ENCODE measurements at regions of chr2 and their contacts with region 1.

Region 1: GRCh38 chr2:197434541-197435513 is at the start of gene SF3B1:
- DNase-seq: peak; percentile 99
- H3K4me3 ChIP-seq: peak within 1 kb of the TSS; percentile 86 to 98 (median 92)
- H3K27ac ChIP-seq: peak within 1 kb of the TSS; percentile 91 to 98 (median 97)
- H3K4me1 ChIP-seq: peaks cover 0 to 50% (median 45%) of the 10 kb centered on the region in 4 donors
- H3K27me3 ChIP-seq: no peaks in the 10 kb centered on the region
- CTCF ChIP-seq: no peak
- EP300 ChIP-seq: peak in 1 of 4 donors; percentile 82
- POLR2A ChIP-seq: peak; percentile 90 to 93
- total RNA-seq, gene SF3B1: 258 to 475 (median 332) TPM

Region 2: DNA sequence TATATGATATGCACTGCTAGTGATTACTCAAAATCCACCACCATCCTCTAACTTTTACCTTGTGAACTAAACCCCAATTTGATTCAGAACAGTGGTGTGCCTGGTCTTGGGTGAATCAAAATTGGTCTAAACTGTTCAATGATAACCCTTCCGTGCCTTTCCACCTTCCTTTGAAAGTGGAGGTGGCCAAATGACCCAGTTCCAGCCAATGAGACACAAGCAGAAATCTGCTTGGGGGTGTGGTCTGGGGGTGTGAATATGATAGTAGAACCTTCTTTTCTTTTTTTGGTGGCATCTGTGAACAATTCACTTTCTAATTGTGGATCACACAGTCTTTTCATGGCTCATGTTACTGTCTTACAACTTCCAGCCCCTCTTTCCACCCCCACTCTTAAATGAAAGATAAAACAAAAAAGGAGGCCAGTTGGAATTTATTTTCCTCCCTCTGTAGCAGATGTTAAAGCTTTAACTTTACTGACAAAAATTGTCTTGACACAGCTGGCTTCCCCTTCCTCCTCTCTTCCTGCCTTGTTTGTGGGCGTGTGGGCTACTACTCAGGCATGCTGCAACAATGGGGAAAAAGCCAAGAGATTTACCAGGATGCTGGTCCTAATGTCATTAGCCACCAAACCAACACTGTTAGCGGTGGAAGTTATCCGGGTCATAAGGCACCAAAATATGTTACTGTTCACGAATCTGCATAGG is 65.4 kb before region 1 on chr2:
- intact Hi-C with region 1: no loop called
- DNase-seq: no peak
- H3K4me3 ChIP-seq: no peak overlapping the region
- H3K27ac ChIP-seq: no peak overlapping the region
- H3K4me1 ChIP-seq: no peaks in the 10 kb centered on the region
- H3K27me3 ChIP-seq: no peaks in the 10 kb centered on the region
- CTCF ChIP-seq: no peak
- EP300 ChIP-seq: no peak
- POLR2A ChIP-seq: no peak

Region 3: GRCh38 chr2:197499594-197500526 is 65.0 kb after region 1 on chr2 and contains the starts of genes HSPD1 and HSPE1:
- intact Hi-C with region 1: loop called (anchors 5 kb)
- DNase-seq: peak; percentile 99
- H3K4me3 ChIP-seq: peak within 1 kb of the TSS; percentile 76 to 95 (median 84)
- H3K27ac ChIP-seq: peak within 1 kb of the TSS; percentile 95 to 96 (median 96)
- H3K4me1 ChIP-seq: peaks cover 0 to 55% (median 43%) of the 10 kb centered on the region in 4 donors
- H3K27me3 ChIP-seq: no peaks in the 10 kb centered on the region
- CTCF ChIP-seq: no peak
- EP300 ChIP-seq: peak; percentile 61 to 97 (median 74)
- POLR2A ChIP-seq: peak; percentile 86 to 92
- total RNA-seq, gene HSPD1: 98.9 to 144 (median 114) TPM
- total RNA-seq, gene HSPE1: 47.8 to 136 (median 106) TPM

Measured in sigmoid colon (tissue), 7 donors.